MCF 10A (cell line): ENCODE measurements at regions of chr9 and their contacts with region 1.

Region 1: GRCh38 chr9:86337469-86338108 is 16.6 kb downstream of the TUT7 start:
- DNase-seq: no peak
- H3K4me3 Mint-ChIP-seq: no peak overlapping the region
- H3K27ac Mint-ChIP-seq: no peak overlapping the region
- H3K4me1 Mint-ChIP-seq: peaks cover 11% of the 10 kb centered on the region
- H3K27me3 Mint-ChIP-seq: no peaks in the 10 kb centered on the region
- CTCF ChIP-seq: no peak

Region 2: DNA sequence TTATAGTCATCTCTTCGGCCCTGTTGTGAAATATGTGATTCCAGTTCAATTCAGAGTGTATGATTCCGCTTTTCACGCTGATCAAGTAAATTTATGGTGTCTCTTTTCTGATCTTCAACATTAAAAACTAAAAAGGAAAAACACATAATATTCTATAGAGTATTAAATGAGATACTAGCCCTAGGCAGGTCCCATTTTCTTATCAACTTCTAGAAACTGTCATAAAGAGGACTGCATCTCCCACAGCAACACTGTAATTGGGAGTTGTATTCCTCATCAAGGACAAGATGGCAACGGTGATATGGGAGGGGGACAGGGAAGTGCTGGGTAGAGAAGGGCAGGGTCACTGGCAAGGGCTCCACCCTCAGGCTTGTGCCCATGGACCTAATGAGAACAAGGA is 309.8 kb before region 1 on chr9:
- CTCF ChIA-PET with region 1: no interaction called
- POLR2A ChIA-PET with region 1: no interaction called
- intact Hi-C with region 1: no loop called
- DNase-seq: no peak
- H3K4me3 Mint-ChIP-seq: no peak overlapping the region
- H3K27ac Mint-ChIP-seq: no peak overlapping the region
- H3K4me1 Mint-ChIP-seq: no peaks in the 10 kb centered on the region
- H3K27me3 Mint-ChIP-seq: no peaks in the 10 kb centered on the region
- CTCF ChIP-seq: no peak

Region 3: DNA sequence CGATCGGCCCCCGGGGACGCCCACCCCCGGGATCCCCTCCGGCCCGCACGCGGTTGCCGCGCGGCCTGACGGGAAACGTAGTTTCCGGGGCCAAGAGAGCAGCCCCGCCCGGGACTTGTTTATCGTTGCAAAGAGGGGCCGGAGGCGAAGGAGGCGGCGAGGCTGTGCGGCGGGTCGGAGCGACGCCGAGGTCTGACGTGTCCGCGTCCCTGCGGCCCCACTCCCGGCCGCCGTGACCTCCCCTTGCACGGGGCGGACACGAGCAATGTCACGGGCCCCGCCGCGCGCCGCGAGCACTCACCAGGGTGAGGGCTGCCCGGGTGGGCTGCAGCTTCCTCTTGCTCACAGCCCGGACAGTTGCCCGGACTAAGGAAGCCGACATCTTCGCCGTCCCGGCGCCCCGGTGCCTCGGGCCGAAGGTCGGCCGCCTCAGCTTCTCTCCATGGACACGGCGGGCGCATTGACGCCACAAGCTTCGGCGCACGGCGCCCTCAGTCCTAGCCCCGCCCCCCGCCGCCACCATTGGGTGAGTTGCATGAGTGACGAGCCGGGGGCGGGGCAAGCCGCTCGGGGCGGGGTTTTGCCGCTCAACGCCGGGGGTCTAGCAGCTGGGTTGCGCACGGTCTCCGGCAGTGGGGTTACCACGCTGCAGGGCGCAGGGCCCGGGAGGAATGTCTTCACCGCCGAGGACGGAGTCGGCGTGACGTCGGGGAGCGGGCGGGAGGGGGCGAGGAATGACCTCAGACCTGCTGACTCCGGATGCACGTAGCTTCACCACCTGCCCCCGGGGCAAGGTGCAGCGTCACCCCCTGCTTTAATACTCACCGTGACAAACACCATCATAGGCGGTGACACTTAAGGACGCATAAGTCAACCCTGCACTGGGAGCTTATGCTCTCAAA is 55.3 kb before region 1 on chr9 and contains the start of gene ISCA1:
- CTCF ChIA-PET with region 1: no interaction called
- POLR2A ChIA-PET with region 1: interaction called, 10 read pairs
- intact Hi-C with region 1: no loop called
- DNase-seq: peak; percentile 95
- H3K4me3 Mint-ChIP-seq: peak within 1 kb of the TSS; percentile 80
- H3K27ac Mint-ChIP-seq: peak within 1 kb of the TSS; percentile 93
- H3K4me1 Mint-ChIP-seq: peaks cover 24% of the 10 kb centered on the region
- H3K27me3 Mint-ChIP-seq: no peaks in the 10 kb centered on the region
- CTCF ChIP-seq: no peak
- total RNA-seq, gene ISCA1: 24.7 and 31.1 TPM in 2 replicates

Region 4: GRCh38 chr9:86368871-86369521 is 31.4 kb after region 1 on chr9:
- CTCF ChIA-PET with region 1: no interaction called
- POLR2A ChIA-PET with region 1: interaction called, 17 read pairs
- intact Hi-C with region 1: no loop called
- DNase-seq: peak; percentile 93
- H3K4me3 Mint-ChIP-seq: peak overlapping the region; percentile 21
- H3K27ac Mint-ChIP-seq: peak overlapping the region; percentile 97
- H3K4me1 Mint-ChIP-seq: peaks cover 26% of the 10 kb centered on the region
- H3K27me3 Mint-ChIP-seq: no peaks in the 10 kb centered on the region
- CTCF ChIP-seq: no peak

Region 5: DNA sequence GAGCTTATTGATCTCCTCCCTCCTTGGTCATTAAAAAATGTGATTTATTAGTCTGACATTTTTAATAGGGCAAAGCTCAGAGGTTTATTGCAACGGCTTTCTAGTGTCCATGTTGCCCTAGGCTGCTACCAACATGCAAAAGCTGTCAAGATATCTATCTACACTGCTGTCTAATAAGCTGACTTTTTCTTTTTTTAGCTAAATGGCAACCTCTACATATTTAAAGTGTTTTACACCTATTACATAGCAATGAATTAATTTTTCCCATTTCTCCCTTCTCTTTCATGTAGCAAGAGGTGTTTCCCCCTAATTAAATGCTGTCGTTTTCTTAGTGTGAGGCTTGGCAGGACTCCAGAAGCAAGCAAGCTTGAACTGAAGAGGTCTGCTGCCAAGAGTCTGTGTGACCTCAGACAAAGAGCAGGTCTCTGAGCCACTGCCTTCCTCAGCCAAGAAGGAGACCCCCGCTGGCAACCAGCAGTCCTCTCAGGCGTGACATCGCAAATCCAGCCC is 530.3 kb after region 1 on chr9:
- CTCF ChIA-PET with region 1: no interaction called
- POLR2A ChIA-PET with region 1: no interaction called
- intact Hi-C with region 1: no loop called
- DNase-seq: peak; percentile 43
- H3K4me3 Mint-ChIP-seq: no peak overlapping the region
- H3K27ac Mint-ChIP-seq: no peak overlapping the region
- H3K4me1 Mint-ChIP-seq: no peaks in the 10 kb centered on the region
- H3K27me3 Mint-ChIP-seq: no peaks in the 10 kb centered on the region
- CTCF ChIP-seq: no peak